Cardiac septum (tissue), 1 donor: ENCODE measurements at regions of chr5 and their contacts with region 1.

Region 1: DNA sequence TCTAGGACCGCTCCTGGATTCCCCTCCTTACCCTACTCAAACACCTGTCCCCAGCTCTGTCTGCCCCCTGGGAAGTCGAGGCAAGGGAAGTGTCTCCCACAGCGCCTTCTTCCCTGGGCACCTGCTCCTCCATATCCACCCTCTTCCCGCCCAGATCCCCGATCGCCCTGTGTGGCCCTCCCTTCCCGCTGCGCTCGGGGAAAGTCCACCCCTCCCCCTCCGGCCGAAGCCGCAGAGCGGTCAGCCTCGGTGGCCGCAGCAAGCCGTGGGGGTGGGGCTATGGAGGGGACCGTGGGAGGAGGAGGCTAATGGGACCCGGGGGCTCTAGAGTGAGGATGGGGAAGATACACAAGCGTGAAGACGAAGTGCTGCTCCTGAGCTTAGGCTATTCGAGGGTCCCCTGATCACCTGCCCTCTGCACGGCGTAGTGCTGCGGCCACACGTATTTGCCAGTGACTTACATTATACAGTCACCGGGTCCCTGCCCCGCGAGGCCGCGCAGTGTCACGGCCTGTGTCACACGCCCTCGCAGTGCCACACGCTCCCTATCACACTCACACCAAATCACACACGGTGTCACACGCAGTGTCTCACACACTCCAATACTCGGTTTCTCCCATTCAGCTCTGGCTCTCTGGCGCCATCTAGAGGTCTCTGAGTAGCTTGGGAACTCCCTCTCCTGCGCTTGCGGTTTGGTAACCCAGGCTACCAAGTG is 658 bp upstream of the PCDH1 start:
- DNase-seq: peak; percentile 93

Region 2: GRCh38 chr5:141691867-141692532 is 186.9 kb before region 1 on chr5:
- intact Hi-C with region 1: loop called (anchors 2 kb)
- DNase-seq: peak; percentile 95

Region 3: DNA sequence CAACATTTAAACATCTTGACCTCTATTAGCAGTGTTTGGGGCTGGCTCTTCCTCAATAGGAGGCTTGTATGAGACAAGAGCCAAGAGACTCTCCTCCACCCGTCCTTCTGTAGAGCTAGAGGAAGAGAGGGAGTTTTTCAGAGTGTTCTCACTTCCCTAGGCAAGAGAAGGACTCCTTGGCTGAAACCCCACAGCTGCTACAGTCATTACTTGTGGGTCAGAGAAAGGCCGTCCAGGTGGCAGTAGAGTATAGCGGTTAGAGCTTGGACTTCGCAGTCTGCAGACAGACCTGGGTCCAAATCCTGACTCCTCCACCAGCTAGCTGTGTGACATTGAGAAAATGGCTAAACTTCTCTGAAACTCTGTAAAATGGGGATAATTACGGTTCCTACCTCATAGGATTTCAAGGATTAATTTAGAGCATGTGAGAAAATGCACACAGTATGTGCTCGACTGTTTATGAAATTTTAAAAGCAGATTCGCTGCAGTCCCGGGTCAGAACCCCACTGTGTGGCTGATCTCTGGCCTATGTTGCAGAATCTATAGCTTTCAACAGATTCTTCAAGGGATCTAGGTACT is 116.0 kb before region 1 on chr5:
- intact Hi-C with region 1: loop called (anchors 2 kb)
- DNase-seq: no peak

Region 4: GRCh38 chr5:141835928-141836670 is 42.8 kb before region 1 on chr5:
- intact Hi-C with region 1: loop called (anchors 5 kb)
- DNase-seq: no peak

Region 5: GRCh38 chr5:141923448-141924352 is 44.8 kb after region 1 on chr5 and contains the start of gene DELE1:
- intact Hi-C with region 1: loop called (anchors 5 kb)
- DNase-seq: peak; percentile 98
- total RNA-seq, gene DELE1: 115 TPM